ENCODE measurements at regions of chr2 and their contacts with region 1.

Region 1: GRCh38 chr2:25131567-25132298 is 36.6 kb downstream of the POMC start:
- DNase-seq: no peak
- H3K4me3 ChIP-seq: no peak overlapping the region
- H3K27ac ChIP-seq: peak overlapping the region; percentile 21
- H3K27me3 ChIP-seq: peaks cover 20% of the 10 kb centered on the region
- CTCF ChIP-seq: no peak

Region 2: GRCh38 chr2:24984912-24985311 is 146.8 kb before region 1 on chr2:
- CTCF ChIA-PET with region 1: interaction called, 229 read pairs
- POLR2A ChIA-PET with region 1: no interaction called
- DNase-seq: no peak
- H3K4me3 ChIP-seq: no peak overlapping the region
- H3K27ac ChIP-seq: no peak overlapping the region
- H3K27me3 ChIP-seq: peaks cover 26% of the 10 kb centered on the region
- CTCF ChIP-seq: no peak

Region 3: DNA sequence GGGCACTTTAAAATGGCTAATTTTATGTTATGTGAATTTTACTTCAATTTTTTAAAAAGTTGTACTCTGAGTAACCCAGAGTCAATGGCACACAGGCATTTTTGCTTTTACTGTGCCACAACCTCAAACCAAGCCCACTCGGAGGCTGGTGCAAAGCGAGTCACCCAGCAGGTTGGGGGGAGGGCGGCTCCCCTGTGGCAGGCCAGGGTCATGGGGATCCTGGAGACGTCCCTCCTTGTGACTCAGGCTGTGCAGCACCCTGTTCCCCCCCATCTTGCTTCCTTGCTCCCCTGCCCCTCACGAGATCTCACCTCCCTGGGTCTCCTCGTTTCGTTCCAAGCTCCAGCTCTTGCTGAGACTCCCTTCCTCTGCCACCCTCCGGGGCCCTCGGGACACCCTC is 21.9 kb before region 1 on chr2:
- CTCF ChIA-PET with region 1: no interaction called
- POLR2A ChIA-PET with region 1: no interaction called
- DNase-seq: no peak
- H3K4me3 ChIP-seq: no peak overlapping the region
- H3K27ac ChIP-seq: no peak overlapping the region
- H3K27me3 ChIP-seq: peaks cover 5% of the 10 kb centered on the region
- CTCF ChIP-seq: no peak

Measured in AG04450 (cell line).